Common myeloid progenitor, CD34-positive (primary cell): ENCODE measurements at regions of chr20 and their contacts with region 1.

Region 1: DNA sequence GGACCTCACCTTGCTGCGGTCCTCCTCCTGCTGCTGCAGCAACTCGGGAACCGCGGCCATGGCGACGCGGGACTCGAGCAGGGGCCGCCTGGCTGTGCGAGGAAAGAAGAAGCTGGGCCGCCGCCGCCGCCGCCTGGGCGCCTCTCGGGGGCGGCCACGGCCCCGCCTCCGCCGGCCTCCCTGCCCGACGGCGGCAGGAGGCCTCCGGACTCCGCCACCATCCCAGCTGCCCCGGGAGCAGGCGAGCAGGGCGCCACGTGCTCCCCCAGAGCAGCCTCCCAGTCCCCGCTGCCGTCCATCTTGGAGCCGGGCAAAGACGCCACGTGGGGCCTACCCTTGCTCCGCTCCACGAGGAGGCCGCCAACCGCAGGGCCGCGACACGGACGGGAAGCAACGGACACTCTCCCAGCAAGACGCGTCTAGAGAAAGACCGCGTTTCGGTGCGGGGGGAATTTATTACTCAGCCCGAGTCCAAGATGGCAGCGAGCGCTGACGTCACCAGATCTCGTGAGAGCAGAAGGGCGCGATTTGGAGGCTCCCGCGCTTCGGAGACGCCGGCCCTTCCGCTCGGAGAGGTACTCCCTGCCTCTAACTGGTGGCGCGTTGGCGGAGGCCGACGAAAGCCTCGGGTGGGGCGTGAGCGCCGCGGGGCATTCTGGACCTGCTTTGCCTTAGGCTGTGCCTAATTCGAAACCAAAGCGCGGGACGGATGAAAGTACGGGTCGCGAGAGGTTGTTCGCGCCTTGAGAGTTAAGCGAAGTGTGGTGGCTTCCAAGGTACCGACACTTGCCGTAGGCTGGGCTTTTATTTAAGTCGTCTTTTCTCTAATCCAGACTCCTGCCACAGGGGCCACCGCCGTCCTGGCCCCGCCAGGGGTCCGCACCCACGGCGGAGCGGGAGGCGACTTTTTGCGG is at the starts of genes MGME1 and SNX5:
- DNase-seq: peak; percentile 99 to 100 (median 100)
- H3K4me3 ChIP-seq: peak within 1 kb of the TSS; percentile 88 to 99 (median 92)
- H3K27ac ChIP-seq: peak within 1 kb of the TSS; percentile 93 to 97
- H3K4me1 ChIP-seq: peaks cover 39 to 79% (median 59%) of the 10 kb centered on the region in 4 experiments
- H3K27me3 ChIP-seq: no peaks in the 10 kb centered on the region

Region 2: GRCh38 chr20:17843246-17844132 is 125.1 kb before region 1 on chr20:
- CTCF ChIA-PET with region 1: no interaction called
- POLR2A ChIA-PET with region 1: no interaction called
- DNase-seq: peak in 2 of 3 donors; percentile 51 to 83
- H3K4me3 ChIP-seq: no peak overlapping the region
- H3K27ac ChIP-seq: no peak overlapping the region
- H3K4me1 ChIP-seq: peaks cover 0 to 24% (median 14%) of the 10 kb centered on the region in 4 experiments
- H3K27me3 ChIP-seq: peaks cover 0 to 2% (median 0%) of the 10 kb centered on the region in 5 experiments

Region 3: DNA sequence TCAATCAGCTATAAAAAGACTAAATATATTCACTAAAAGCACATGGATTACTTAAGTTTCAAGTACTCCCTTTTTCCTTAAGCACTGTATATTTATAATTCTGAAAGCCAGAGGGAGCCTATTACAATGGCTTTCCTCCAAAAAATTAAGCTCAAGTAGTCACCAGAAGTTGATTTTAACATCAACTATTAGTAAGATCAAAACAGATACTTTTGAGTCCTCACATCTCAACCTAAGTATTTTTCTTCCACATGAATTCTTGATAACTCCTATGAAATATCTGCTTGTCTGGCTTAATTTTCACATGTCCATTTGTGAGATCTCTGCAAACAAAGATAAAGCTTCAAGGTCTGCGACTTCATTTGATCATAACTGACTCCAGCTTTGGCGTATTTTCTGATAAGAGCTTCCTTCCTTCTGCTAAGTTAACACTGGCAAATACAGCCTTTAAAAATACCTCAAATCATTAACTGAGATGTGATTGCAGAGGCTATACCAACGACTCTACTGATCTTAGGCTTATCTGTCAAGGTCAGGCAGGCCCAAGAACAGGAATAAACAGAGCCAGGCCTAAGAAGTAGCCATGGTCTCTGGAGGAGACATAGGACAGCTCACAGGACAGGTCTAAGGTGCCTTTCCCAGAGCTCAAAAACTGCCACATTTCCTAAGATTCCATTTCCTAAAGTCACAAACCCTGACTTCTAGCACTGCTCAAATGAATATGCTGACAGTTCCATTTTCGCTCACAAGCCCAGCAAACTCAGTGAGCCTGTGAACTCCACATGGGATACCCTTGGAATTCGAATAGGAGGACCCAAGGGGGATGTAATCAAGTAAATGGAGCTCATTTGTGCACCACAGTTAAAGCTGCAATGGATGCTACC is 10.0 kb before region 1 on chr20:
- CTCF ChIA-PET with region 1: interaction called, 30 read pairs
- POLR2A ChIA-PET with region 1: interaction called, 10 read pairs
- DNase-seq: peak in 2 of 3 donors; percentile 51 to 75
- H3K4me3 ChIP-seq: peak overlapping the region in 3 of 7 experiments; percentile 8 to 58 (median 34)
- H3K27ac ChIP-seq: peak overlapping the region; percentile 47 to 77
- H3K4me1 ChIP-seq: peaks cover 57 to 88% (median 71%) of the 10 kb centered on the region in 4 experiments
- H3K27me3 ChIP-seq: no peaks in the 10 kb centered on the region

Region 4: DNA sequence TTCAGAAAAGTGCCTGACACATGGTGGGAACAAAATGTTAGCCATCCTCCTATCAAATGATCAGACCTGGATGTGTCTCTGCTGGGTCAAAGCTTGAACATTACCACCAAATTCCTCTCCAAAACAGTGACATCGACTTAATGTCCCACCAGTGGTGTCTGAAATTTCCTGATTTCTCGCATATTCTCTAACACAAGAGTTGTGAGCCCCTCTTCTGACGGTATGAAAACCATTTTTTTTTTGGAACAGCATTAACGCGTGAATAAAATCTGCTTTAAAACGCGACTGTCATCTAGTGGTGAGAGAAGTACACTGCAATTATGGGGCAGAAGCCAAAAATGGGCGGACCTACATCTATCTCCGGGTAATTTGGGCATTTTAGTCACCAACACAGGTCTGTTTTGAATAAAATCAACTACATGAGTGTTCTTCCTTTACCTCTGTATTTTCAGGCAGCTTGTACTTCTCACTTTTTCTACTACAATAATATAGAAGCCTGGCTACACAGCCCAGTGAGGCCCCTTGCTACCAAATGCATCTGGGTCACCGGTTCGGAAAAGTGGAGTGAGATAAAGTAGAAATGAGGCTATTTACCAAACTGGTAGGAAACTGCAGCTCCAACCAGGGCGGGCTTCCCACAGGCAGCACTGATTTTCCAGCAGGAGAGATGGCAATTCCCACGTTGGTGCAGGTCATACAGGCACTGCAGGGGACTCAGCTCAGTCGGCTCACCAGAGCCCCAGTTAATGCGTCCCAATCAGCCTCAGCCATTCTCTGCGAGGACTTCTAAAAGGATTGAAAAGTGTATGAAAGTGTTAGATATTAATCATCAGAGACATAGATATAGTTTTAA is 27.6 kb after region 1 on chr20:
- CTCF ChIA-PET with region 1: interaction called, 11 read pairs
- POLR2A ChIA-PET with region 1: interaction called, 4 read pairs
- DNase-seq: peak; percentile 72 to 85 (median 80)
- H3K4me3 ChIP-seq: peak overlapping the region in 1 of 7 experiments; percentile 7
- H3K27ac ChIP-seq: no peak overlapping the region
- H3K4me1 ChIP-seq: peaks cover 5 to 21% (median 11%) of the 10 kb centered on the region in 4 experiments
- H3K27me3 ChIP-seq: no peaks in the 10 kb centered on the region